ENCODE measurements at regions of chr3 and their contacts with region 1.

Region 1: DNA sequence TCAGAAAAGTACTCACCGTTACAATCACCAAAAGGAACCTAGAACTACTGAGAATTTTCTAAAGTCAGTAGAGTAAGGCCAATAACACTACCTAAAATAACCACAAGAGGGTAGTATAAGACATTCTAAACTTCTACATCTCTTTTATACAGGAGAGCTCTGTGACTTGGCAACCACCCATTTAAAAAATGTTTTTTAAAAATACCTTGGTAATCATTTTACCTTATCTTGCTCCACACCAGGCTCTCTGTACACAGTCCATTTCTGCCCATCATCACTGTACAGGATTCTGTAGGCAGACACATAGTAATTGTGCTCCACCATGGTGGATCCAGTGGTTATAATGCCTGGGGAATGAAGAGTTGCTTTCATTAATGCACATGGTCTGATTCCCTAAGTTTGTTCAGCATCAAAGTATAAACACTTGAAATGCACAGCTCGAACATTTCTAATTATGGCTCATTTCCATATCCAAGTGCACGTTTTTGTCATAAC is 54.5 kb downstream of the ST3GAL6 start:
- DNase-seq: peak in 1 of 2 donors; percentile 58
- ATAC-seq: peak; percentile 65 to 75 (median 69)
- H3K4me3 ChIP-seq: no peak overlapping the region
- H3K4me3 Mint-ChIP-seq: no peak overlapping the region
- H3K27ac ChIP-seq: no peak overlapping the region
- H3K27ac Mint-ChIP-seq: no peak overlapping the region
- H3K4me1 ChIP-seq: no peaks in the 10 kb centered on the region
- H3K4me1 Mint-ChIP-seq: no peaks in the 10 kb centered on the region
- H3K27me3 ChIP-seq: no peaks in the 10 kb centered on the region
- H3K27me3 Mint-ChIP-seq: no peaks in the 10 kb centered on the region
- CTCF ChIP-seq: peak; percentile 81

Region 2: GRCh38 chr3:98039322-98040024 is 778.1 kb before region 1 on chr3:
- intact Hi-C with region 1: loop called (anchors 2 kb)
- DNase-seq: peak; percentile 45 to 91
- ATAC-seq: peak; percentile 95 to 98 (median 98)
- H3K4me3 ChIP-seq: peak overlapping the region; percentile 9
- H3K4me3 Mint-ChIP-seq: peak overlapping the region; percentile 59
- H3K27ac ChIP-seq: peak overlapping the region; percentile 4
- H3K27ac Mint-ChIP-seq: peak overlapping the region; percentile 52 to 79
- H3K4me1 ChIP-seq: no peaks in the 10 kb centered on the region
- H3K4me1 Mint-ChIP-seq: peaks cover 7% of the 10 kb centered on the region in 2 donors
- H3K27me3 ChIP-seq: peaks cover 4% of the 10 kb centered on the region
- H3K27me3 Mint-ChIP-seq: peaks cover 3 to 28% of the 10 kb centered on the region in 2 donors
- CTCF ChIP-seq: peak; percentile 96

Region 3: DNA sequence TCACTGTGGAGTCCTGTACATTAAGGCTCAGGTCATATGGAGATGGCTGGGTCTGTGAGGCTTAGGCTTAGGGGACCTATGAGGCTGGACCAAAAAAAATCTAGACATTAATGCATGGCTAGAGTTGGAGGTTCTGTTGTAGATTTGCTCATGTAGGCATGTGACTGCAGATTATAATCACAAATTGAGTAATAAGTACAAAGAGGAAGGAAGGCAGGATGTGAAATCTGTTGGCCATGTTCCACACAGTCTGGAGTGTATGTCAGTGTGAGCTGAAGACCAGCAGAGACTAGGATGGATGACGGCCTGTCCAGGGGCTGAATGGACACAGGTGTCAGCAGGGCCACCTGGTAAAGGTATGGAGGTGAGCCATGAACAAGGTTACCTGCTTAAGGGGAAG is 54.5 kb before region 1 on chr3 and contains the start of gene ST3GAL6:
- intact Hi-C with region 1: no loop called
- DNase-seq: no peak
- ATAC-seq: peak in 1 of 3 donors; percentile 81
- H3K4me3 ChIP-seq: no peak within 1 kb of the TSS
- H3K4me3 Mint-ChIP-seq: no peak within 1 kb of the TSS
- H3K27ac ChIP-seq: no peak within 1 kb of the TSS
- H3K27ac Mint-ChIP-seq: no peak within 1 kb of the TSS
- H3K4me1 ChIP-seq: no peaks in the 10 kb centered on the region
- H3K4me1 Mint-ChIP-seq: no peaks in the 10 kb centered on the region
- H3K27me3 ChIP-seq: no peaks in the 10 kb centered on the region
- H3K27me3 Mint-ChIP-seq: peaks cover 3 to 18% of the 10 kb centered on the region in 2 donors
- CTCF ChIP-seq: no peak
- total RNA-seq, gene ST3GAL6: 0.38 to 3.7 (median 1.4) TPM

Region 4: GRCh38 chr3:98877132-98877531 is 59.5 kb after region 1 on chr3:
- intact Hi-C with region 1: no loop called
- DNase-seq: no peak
- ATAC-seq: no peak
- H3K4me3 ChIP-seq: no peak overlapping the region
- H3K4me3 Mint-ChIP-seq: no peak overlapping the region
- H3K27ac ChIP-seq: no peak overlapping the region
- H3K27ac Mint-ChIP-seq: no peak overlapping the region
- H3K4me1 ChIP-seq: no peaks in the 10 kb centered on the region
- H3K4me1 Mint-ChIP-seq: no peaks in the 10 kb centered on the region
- H3K27me3 ChIP-seq: no peaks in the 10 kb centered on the region
- H3K27me3 Mint-ChIP-seq: no peaks in the 10 kb centered on the region
- CTCF ChIP-seq: no peak

Region 5: GRCh38 chr3:99172736-99173657 is 355.4 kb after region 1 on chr3:
- intact Hi-C with region 1: loop called (anchors 5 kb)
- DNase-seq: peak in 1 of 2 donors; percentile 46
- ATAC-seq: no peak
- H3K4me3 ChIP-seq: no peak overlapping the region
- H3K4me3 Mint-ChIP-seq: no peak overlapping the region
- H3K27ac ChIP-seq: no peak overlapping the region
- H3K27ac Mint-ChIP-seq: no peak overlapping the region
- H3K4me1 ChIP-seq: no peaks in the 10 kb centered on the region
- H3K4me1 Mint-ChIP-seq: no peaks in the 10 kb centered on the region
- H3K27me3 ChIP-seq: no peaks in the 10 kb centered on the region
- H3K27me3 Mint-ChIP-seq: no peaks in the 10 kb centered on the region
- CTCF ChIP-seq: no peak

Region 6: DNA sequence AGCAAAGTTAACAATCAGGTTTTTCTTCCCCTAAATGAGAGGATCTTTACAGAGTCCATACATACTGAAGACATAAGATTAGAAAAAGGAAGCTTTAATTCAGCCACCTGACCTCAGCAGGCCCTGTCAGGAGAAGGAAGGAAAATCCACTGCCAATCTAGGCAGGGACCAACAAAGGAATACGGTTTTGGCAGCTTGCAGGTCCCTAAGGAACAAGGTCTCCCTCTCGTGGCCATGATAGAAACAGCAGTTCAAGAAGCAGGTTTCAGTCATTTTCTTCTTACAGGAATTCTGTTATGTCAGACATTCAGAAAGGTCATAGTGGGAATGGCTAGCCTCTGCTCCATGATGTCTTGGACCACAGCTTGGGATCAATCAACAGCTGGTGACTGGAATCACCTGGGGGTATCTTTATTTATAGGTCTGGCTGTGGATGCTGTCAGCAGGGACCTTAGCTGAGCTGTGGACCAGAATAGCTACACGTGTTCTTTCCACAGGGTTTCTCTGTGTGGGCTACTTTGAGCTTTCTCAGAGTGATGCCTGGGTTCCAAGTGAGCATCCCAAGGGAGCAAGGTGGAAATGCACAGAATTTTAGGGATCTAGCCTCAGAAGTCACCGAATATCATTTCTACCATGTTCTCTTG is 990.7 kb after region 1 on chr3:
- intact Hi-C with region 1: loop called (anchors 1 kb)
- DNase-seq: peak in 1 of 2 donors; percentile 76
- ATAC-seq: peak; percentile 51 to 70 (median 60)
- H3K4me3 ChIP-seq: no peak overlapping the region
- H3K4me3 Mint-ChIP-seq: no peak overlapping the region
- H3K27ac ChIP-seq: no peak overlapping the region
- H3K27ac Mint-ChIP-seq: no peak overlapping the region
- H3K4me1 ChIP-seq: no peaks in the 10 kb centered on the region
- H3K4me1 Mint-ChIP-seq: no peaks in the 10 kb centered on the region
- H3K27me3 ChIP-seq: no peaks in the 10 kb centered on the region
- H3K27me3 Mint-ChIP-seq: peaks cover 0 to 4% of the 10 kb centered on the region in 2 donors
- CTCF ChIP-seq: peak; percentile 75

Measured in natural killer cell (primary cell).